CD8-positive, alpha-beta memory T cell (primary cell): ENCODE measurements at regions of chr10 and their contacts with region 1.

Region 1: GRCh38 chr10:14588084-14588937 is 186.4 kb downstream of the FAM107B start:
- DNase-seq: peak in 3 of 5 donors; percentile 43 to 75 (median 52)
- H3K4me3 ChIP-seq: peak overlapping the region; percentile 38
- H3K4me3 Mint-ChIP-seq: peak overlapping the region; percentile 72 to 91 (median 82)
- H3K27ac ChIP-seq: peak overlapping the region; percentile 78
- H3K27ac Mint-ChIP-seq: peak overlapping the region; percentile 94 to 100 (median 98)
- H3K4me1 ChIP-seq: peaks cover 83% of the 10 kb centered on the region
- H3K4me1 Mint-ChIP-seq: peaks cover 89 to 99% (median 97%) of the 10 kb centered on the region in 3 donors
- H3K27me3 ChIP-seq: no peaks in the 10 kb centered on the region
- H3K27me3 Mint-ChIP-seq: no peaks in the 10 kb centered on the region

Region 2: GRCh38 chr10:13712837-13713581 is 875.3 kb before region 1 on chr10:
- CTCF ChIA-PET with region 1: no interaction called
- POLR2A ChIA-PET with region 1: no interaction called
- DNase-seq: no peak
- H3K4me3 ChIP-seq: no peak overlapping the region
- H3K4me3 Mint-ChIP-seq: no peak overlapping the region
- H3K27ac ChIP-seq: no peak overlapping the region
- H3K27ac Mint-ChIP-seq: no peak overlapping the region
- H3K4me1 ChIP-seq: peaks cover 6% of the 10 kb centered on the region
- H3K4me1 Mint-ChIP-seq: peaks cover 5 to 19% (median 15%) of the 10 kb centered on the region in 3 donors
- H3K27me3 ChIP-seq: peaks cover 2% of the 10 kb centered on the region
- H3K27me3 Mint-ChIP-seq: peaks cover 2 to 22% of the 10 kb centered on the region in 2 donors

Region 3: DNA sequence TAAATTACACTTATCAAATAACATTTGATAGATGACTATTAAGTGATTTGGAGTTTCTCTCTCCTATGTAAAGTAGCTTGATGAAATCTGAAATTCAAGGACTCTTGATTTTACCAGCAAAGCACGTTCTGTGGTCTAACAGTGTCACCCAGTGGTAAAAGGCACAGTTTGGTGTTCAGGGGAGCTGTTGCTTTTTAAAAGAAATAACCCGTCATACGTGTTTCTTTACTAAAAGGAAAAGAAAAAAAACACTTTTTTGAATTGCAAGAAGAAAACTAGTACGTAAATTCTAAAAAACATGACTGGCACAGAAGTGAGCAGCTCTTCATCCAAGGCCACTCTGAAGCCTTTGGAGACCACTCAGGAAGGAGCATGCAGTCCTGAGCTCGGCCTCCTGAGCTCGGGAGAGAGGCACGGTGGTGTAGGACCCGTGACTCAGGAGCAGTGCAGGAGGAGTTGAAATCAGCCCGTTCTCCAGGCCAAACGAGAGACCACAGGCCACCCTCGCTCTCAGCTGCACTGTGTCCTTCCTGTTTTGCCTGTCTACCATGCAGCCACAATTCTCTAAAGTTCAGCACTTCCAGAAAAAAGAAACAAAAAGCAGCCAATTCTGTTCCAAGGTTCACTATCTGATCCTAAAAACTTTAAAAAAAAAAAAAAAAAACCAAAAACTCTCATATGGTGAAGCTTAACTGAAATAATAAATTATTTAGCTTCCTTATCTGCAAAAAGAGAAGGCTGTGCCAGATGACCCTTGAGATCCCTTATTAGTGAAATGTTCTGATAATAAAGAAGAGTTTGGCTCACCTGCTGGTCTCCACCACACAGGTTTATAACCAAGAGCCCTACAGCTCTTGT is 45.0 kb before region 1 on chr10:
- CTCF ChIA-PET with region 1: interaction called, 4 read pairs
- POLR2A ChIA-PET with region 1: interaction called, 10 read pairs
- DNase-seq: peak in 3 of 5 donors; percentile 54 to 74 (median 63)
- H3K4me3 ChIP-seq: peak overlapping the region; percentile 37
- H3K4me3 Mint-ChIP-seq: peak overlapping the region; percentile 21 to 82 (median 76)
- H3K27ac ChIP-seq: peak overlapping the region; percentile 48
- H3K27ac Mint-ChIP-seq: peak overlapping the region; percentile 80 to 96 (median 90)
- H3K4me1 ChIP-seq: peaks cover 45% of the 10 kb centered on the region
- H3K4me1 Mint-ChIP-seq: peaks cover 73 to 95% (median 94%) of the 10 kb centered on the region in 3 donors
- H3K27me3 ChIP-seq: no peaks in the 10 kb centered on the region
- H3K27me3 Mint-ChIP-seq: no peaks in the 10 kb centered on the region

Region 4: GRCh38 chr10:14564268-14564744 is 24.0 kb before region 1 on chr10:
- CTCF ChIA-PET with region 1: interaction called, 17 read pairs
- POLR2A ChIA-PET with region 1: interaction called, 10 read pairs
- DNase-seq: peak in 3 of 5 donors; percentile 68 to 78 (median 77)
- H3K4me3 ChIP-seq: peak overlapping the region; percentile 20
- H3K4me3 Mint-ChIP-seq: peak overlapping the region; percentile 70 to 89 (median 79)
- H3K27ac ChIP-seq: peak overlapping the region; percentile 72
- H3K27ac Mint-ChIP-seq: peak overlapping the region; percentile 89 to 99 (median 95)
- H3K4me1 ChIP-seq: peaks cover 89% of the 10 kb centered on the region
- H3K4me1 Mint-ChIP-seq: peaks cover 88 to 100% (median 95%) of the 10 kb centered on the region in 3 donors
- H3K27me3 ChIP-seq: no peaks in the 10 kb centered on the region
- H3K27me3 Mint-ChIP-seq: no peaks in the 10 kb centered on the region

Region 5: DNA sequence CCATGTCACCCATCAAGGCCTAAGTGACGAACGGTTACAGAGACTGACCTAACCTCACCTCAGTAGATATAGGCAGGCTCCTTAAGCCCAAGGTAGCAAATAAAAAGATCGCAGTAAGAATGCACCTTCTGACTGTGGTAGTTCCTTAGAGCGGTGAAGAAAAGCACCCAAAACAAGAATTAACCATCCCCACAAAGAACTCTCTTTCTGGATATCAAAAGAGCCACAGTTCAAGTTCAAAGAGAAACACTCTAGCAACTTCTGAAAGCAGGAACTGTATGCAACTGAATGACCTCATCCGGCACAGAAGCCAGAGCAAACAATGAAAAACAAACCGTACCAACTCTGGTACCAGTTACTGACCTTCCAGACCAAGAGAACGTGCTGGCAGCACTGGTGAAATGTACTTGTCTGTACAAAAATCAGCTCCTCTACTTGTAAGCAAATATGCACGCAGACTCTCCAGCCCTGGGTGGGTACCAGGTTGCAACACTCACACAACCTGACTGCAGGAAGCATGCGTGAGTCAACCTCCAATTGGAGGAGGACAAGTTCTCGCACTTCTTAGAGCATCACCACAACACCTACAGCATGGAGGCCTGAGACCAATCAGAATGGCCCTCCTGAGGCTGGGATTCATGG is 16.3 kb before region 1 on chr10:
- CTCF ChIA-PET with region 1: interaction called, 19 read pairs
- POLR2A ChIA-PET with region 1: interaction called, 21 read pairs
- DNase-seq: peak; percentile 38 to 91 (median 84)
- H3K4me3 ChIP-seq: peak overlapping the region; percentile 70
- H3K4me3 Mint-ChIP-seq: peak overlapping the region; percentile 83 to 96 (median 93)
- H3K27ac ChIP-seq: peak overlapping the region; percentile 85
- H3K27ac Mint-ChIP-seq: peak overlapping the region; percentile 89 to 99 (median 98)
- H3K4me1 ChIP-seq: peaks cover 69% of the 10 kb centered on the region
- H3K4me1 Mint-ChIP-seq: peaks cover 75 to 96% (median 95%) of the 10 kb centered on the region in 3 donors
- H3K27me3 ChIP-seq: no peaks in the 10 kb centered on the region
- H3K27me3 Mint-ChIP-seq: no peaks in the 10 kb centered on the region

Region 6: GRCh38 chr10:14621037-14621436 is 32.7 kb after region 1 on chr10:
- CTCF ChIA-PET with region 1: no interaction called
- POLR2A ChIA-PET with region 1: no interaction called
- DNase-seq: no peak
- H3K4me3 ChIP-seq: no peak overlapping the region
- H3K4me3 Mint-ChIP-seq: no peak overlapping the region
- H3K27ac ChIP-seq: no peak overlapping the region
- H3K27ac Mint-ChIP-seq: no peak overlapping the region
- H3K4me1 ChIP-seq: peaks cover 13% of the 10 kb centered on the region
- H3K4me1 Mint-ChIP-seq: peaks cover 12 to 24% (median 21%) of the 10 kb centered on the region in 3 donors
- H3K27me3 ChIP-seq: no peaks in the 10 kb centered on the region
- H3K27me3 Mint-ChIP-seq: no peaks in the 10 kb centered on the region